ENCODE measurements at regions of chr1 and their contacts with region 1.

Region 1: GRCh38 chr1:56758135-56758534 is 61.1 kb downstream of the FYB2 start:
- DNase-seq: peak; percentile 24
- H3K4me3 ChIP-seq: no peak overlapping the region
- H3K27ac ChIP-seq: no peak overlapping the region
- H3K4me1 ChIP-seq: no peaks in the 10 kb centered on the region
- H3K27me3 ChIP-seq: no peaks in the 10 kb centered on the region
- CTCF ChIP-seq: peak in 1 of 2 donors; percentile 53

Region 2: GRCh38 chr1:56803561-56804156 is 45.5 kb after region 1 on chr1:
- CTCF ChIA-PET with region 1: no interaction called
- dilution Hi-C with region 1: no loop called
- in situ Hi-C with region 1: no loop called
- intact Hi-C with region 1: loop called (anchors 1 kb)
- DNase-seq: peak; percentile 19
- H3K4me3 ChIP-seq: no peak overlapping the region
- H3K27ac ChIP-seq: no peak overlapping the region
- H3K4me1 ChIP-seq: no peaks in the 10 kb centered on the region
- H3K27me3 ChIP-seq: no peaks in the 10 kb centered on the region
- CTCF ChIP-seq: peak; percentile 59 to 73

Region 3: GRCh38 chr1:56814205-56814604 is 56.1 kb after region 1 on chr1:
- CTCF ChIA-PET with region 1: no interaction called
- dilution Hi-C with region 1: no loop called
- in situ Hi-C with region 1: no loop called
- intact Hi-C with region 1: no loop called
- DNase-seq: no peak
- H3K4me3 ChIP-seq: no peak overlapping the region
- H3K27ac ChIP-seq: no peak overlapping the region
- H3K4me1 ChIP-seq: peaks cover 22% of the 10 kb centered on the region
- H3K27me3 ChIP-seq: no peaks in the 10 kb centered on the region
- CTCF ChIP-seq: no peak

Region 4: GRCh38 chr1:56864430-56864829 is 106.3 kb after region 1 on chr1:
- CTCF ChIA-PET with region 1: no interaction called
- dilution Hi-C with region 1: no loop called
- in situ Hi-C with region 1: no loop called
- intact Hi-C with region 1: no loop called
- DNase-seq: peak; percentile 11
- H3K4me3 ChIP-seq: no peak overlapping the region
- H3K27ac ChIP-seq: no peak overlapping the region
- H3K4me1 ChIP-seq: peaks cover 5% of the 10 kb centered on the region
- H3K27me3 ChIP-seq: peaks cover 4% of the 10 kb centered on the region
- CTCF ChIP-seq: no peak

Region 5: GRCh38 chr1:57572016-57572415 is 813.9 kb after region 1 on chr1:
- CTCF ChIA-PET with region 1: no interaction called
- dilution Hi-C with region 1: no loop called
- in situ Hi-C with region 1: no loop called
- intact Hi-C with region 1: no loop called
- DNase-seq: no peak
- H3K4me3 ChIP-seq: no peak overlapping the region
- H3K27ac ChIP-seq: no peak overlapping the region
- H3K4me1 ChIP-seq: no peaks in the 10 kb centered on the region
- H3K27me3 ChIP-seq: no peaks in the 10 kb centered on the region
- CTCF ChIP-seq: no peak

Measured in mammary epithelial cell (primary cell).